ENCODE measurements at regions of chr13 and their contacts with region 1.

Region 1: GRCh38 chr13:34139660-34140227 is 321.8 kb downstream of the RFC3 start:
- DNase-seq: no peak
- ATAC-seq: peak; percentile 75

Region 2: DNA sequence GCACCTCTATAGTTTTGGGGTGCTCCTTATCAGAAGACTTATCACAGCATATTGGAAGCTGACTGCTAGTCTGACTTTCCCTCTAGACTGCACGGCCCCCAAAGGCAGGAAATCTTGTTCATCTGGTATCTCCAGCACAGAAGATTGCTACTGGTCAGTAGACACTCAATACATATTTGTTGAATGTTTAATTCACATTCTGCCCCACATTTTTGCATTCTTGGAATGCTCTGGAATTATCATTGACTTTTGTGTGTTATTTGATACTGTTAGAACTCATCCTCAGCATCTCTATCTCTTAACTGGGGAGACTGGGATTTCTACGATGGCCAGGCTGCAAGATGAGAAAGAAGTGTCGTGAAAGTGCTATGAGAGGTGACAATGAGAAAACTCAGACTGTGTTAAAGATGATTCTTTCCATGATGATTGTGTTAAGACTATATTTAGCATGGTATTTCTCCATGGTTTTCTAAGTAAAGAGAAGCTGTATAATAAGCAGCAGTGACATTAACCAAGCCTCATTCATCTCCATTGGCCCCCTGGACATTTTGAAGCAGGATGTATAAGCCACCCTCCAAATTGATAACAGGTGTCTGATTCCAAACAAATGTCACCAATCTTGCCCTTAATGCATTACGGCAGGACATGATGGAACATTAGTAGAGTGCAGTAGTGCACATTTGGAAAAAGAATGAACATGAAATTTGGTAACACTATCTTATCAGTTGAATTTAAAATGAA is 119.1 kb after region 1 on chr13:
- intact Hi-C with region 1: no loop called
- DNase-seq: no peak
- ATAC-seq: no peak

Region 3: GRCh38 chr13:34294483-34295129 is 154.9 kb after region 1 on chr13:
- intact Hi-C with region 1: loop called in 1 of 2 experiments (anchors 10 kb)
- DNase-seq: peak in 1 of 2 donors; percentile 5
- ATAC-seq: no peak

Region 4: DNA sequence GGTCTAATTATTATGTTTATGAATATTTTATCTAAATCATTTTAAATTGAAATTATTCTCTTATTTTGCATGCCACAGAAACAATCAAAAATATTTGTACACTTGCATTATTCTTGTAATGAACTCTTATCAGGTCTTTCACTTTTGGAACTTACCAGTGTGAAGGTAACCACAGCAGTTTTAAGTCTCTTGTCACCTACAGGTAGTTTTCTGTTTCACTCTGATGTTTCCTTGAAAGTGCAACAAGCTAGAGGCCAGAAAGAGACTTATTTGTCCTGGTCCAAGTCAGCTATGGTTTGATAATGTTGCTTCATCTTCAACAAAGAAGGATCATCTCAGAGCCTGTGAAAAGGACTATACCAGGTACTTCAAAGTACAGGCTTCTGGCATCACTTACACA is 668.9 kb after region 1 on chr13:
- intact Hi-C with region 1: no loop called
- DNase-seq: no peak
- ATAC-seq: no peak